Activated CD4-positive, alpha-beta T cell treated with anti-CD3 and anti-CD28 coated beads for 36 hours (primary cell): ENCODE measurements at regions of chr17 and their contacts with region 1.

Region 1: GRCh38 chr17:55527540-55528118 is 16.4 kb upstream of the SMIM36 start:
- DNase-seq: peak; percentile 48
- ATAC-seq: no peak
- H3K4me3 Mint-ChIP-seq: no peak overlapping the region
- H3K27ac Mint-ChIP-seq: no peak overlapping the region
- H3K4me1 Mint-ChIP-seq: peaks cover 5% of the 10 kb centered on the region
- H3K27me3 Mint-ChIP-seq: peaks cover 20% of the 10 kb centered on the region

Region 2: DNA sequence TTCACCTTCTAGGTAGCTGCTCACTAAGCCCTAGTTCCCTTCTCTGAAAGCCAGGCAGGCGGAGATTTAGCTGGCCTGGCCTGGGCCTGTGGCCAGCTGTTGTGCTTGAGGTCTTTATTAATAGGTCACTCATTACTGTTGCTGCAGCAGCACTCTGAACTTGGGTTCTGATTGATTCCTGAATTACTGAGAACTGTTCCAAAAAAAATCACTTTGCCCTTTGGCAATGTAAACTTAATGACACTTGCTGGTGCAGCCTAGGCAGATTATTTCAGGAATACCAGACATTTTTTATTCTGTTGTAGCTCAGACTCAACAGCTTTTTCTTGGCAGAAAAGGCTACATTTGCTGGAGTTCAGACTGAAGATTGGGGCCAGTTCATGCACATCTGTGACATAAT is 624.3 kb before region 1 on chr17:
- CTCF ChIA-PET with region 1: no interaction called
- POLR2A ChIA-PET with region 1: no interaction called
- intact Hi-C with region 1: no loop called
- DNase-seq: no peak
- ATAC-seq: no peak
- H3K4me3 Mint-ChIP-seq: no peak overlapping the region
- H3K27ac Mint-ChIP-seq: no peak overlapping the region
- H3K4me1 Mint-ChIP-seq: peaks cover 10% of the 10 kb centered on the region
- H3K27me3 Mint-ChIP-seq: peaks cover 24% of the 10 kb centered on the region

Region 3: DNA sequence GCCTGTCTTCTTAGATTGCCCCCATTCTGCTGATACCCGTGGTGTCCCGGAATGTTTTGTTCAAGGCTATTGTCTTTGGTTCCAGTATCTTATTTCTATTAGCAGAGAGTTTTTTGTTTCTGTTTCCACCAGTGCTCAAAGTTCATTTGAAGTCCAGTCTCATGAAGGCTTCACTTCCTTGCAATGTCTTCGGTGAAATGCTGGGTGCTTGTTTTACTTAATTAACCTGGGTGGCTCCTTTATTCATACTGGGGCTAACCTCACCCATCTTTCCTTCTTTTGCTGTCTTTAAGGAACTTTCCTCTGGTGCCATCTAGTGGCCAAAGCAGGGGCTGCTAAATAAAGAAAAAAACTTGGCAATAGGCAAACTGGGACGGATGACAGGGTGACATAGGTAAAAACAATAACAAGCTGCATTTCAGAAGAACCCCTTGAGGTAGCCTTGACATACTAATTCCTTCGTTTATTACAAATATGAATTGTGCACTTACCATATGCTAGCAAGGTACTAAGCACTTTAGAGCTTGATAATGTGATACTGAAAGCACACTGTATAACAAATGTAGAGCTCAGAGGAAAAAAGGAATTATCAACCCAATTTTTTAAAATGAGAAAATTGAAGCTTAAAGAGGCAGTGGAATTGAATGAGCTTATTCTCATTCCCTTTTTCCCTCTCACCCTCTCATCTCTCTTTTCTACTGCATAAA is 13.6 kb before region 1 on chr17:
- CTCF ChIA-PET with region 1: interaction called, 11 read pairs
- POLR2A ChIA-PET with region 1: no interaction called
- intact Hi-C with region 1: no loop called
- DNase-seq: peak; percentile 77
- ATAC-seq: peak; percentile 66
- H3K4me3 Mint-ChIP-seq: no peak overlapping the region
- H3K27ac Mint-ChIP-seq: no peak overlapping the region
- H3K4me1 Mint-ChIP-seq: no peaks in the 10 kb centered on the region
- H3K27me3 Mint-ChIP-seq: peaks cover 2% of the 10 kb centered on the region

Region 4: DNA sequence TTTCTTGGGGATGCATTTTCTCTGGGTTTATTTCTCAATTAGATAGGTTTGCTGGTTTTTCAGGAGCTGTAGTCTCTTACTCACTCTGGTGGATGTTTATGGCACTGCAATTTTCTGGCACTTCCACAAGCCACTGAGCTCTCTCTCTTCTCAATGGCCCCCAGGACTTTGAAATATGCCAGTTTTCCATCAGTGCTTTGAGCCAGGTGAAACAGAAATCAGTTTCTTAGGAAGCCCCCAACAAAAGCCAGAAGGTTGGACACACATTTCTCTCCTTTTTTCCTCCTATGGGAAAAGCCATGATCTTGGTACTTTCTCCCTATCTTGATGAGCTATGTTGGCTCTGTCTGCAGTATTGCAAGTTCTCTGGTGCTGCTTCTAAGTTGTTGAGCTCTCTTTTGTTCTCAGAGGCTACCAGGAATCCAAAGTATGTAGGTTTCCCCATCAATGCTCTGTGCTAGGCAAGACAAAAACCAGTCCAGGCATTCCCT is 74.3 kb after region 1 on chr17:
- CTCF ChIA-PET with region 1: interaction called, 158 read pairs
- POLR2A ChIA-PET with region 1: no interaction called
- intact Hi-C with region 1: loop called (anchors 1 kb)
- DNase-seq: peak; percentile 37
- ATAC-seq: peak; percentile 58
- H3K4me3 Mint-ChIP-seq: no peak overlapping the region
- H3K27ac Mint-ChIP-seq: no peak overlapping the region
- H3K4me1 Mint-ChIP-seq: no peaks in the 10 kb centered on the region
- H3K27me3 Mint-ChIP-seq: peaks cover 16% of the 10 kb centered on the region

Region 5: GRCh38 chr17:55717898-55718735 is 190.5 kb after region 1 on chr17:
- CTCF ChIA-PET with region 1: interaction called, 29 read pairs
- POLR2A ChIA-PET with region 1: no interaction called
- intact Hi-C with region 1: loop called (anchors 1 kb)
- DNase-seq: peak; percentile 82
- ATAC-seq: no peak
- H3K4me3 Mint-ChIP-seq: no peak overlapping the region
- H3K27ac Mint-ChIP-seq: no peak overlapping the region
- H3K4me1 Mint-ChIP-seq: no peaks in the 10 kb centered on the region
- H3K27me3 Mint-ChIP-seq: peaks cover 24% of the 10 kb centered on the region

Region 6: DNA sequence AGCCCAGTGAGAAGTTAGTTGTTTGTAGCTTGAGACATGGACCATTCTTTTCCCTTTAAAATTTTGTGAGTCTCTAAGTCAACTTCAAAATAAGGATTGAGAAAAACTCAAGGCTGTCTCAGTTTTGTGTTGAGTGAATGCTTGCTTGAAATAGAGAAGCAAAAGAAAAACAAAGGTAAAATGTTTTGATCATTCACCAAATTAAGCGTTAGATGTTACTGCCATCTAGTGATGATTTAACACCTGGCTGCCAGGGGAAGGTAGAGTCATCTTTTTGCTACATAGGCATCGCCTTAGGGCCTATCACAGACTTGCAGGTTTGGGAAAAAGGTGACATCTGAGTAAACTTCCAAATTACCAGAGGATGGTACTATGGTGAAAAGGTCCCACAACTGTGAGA is 297.6 kb after region 1 on chr17:
- CTCF ChIA-PET with region 1: no interaction called
- POLR2A ChIA-PET with region 1: interaction called, 4 read pairs
- intact Hi-C with region 1: loop called (anchors 1 to 2 kb)
- DNase-seq: no peak
- ATAC-seq: no peak
- H3K4me3 Mint-ChIP-seq: no peak overlapping the region
- H3K27ac Mint-ChIP-seq: no peak overlapping the region
- H3K4me1 Mint-ChIP-seq: no peaks in the 10 kb centered on the region
- H3K27me3 Mint-ChIP-seq: no peaks in the 10 kb centered on the region